ENCODE measurements at regions of chr3 and their contacts with region 1.

Region 1: DNA sequence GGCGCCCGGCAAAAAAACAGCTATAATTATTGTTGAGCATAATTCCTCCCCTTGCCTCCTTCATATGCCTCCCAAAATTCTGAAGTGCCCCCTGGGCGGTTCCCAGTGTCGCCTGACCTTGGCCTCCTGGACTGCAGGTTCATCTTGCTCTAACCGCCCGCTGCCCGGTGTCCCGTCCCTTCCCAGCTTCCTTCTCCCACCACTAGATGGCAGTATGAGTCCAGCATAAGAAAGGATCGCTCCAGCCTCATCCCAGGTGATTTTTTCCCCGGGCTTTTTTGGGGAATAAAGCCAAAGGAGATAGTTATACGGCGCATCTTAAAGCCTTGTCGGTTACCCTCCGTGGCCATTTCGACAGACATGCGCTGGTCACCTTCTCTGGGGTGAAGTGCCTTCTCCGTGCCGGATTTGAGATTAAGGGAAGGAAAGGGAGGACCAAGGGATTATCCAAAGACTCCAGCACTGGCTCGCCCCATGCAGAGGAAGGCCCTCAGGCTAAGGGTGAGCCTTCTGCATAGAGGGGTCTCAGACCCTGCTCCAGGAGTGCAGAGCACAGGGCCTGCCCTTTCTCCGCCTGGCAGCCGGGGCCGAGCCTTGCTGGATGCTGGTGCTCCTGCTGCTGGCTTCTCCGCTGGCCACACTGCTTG is 45.8 kb upstream of the TRA2B start:
- DNase-seq: peak; percentile 70 to 83
- ATAC-seq: peak; percentile 92
- H3K4me3 ChIP-seq: no peak overlapping the region
- H3K27ac ChIP-seq: no peak overlapping the region
- H3K4me1 ChIP-seq: no peaks in the 10 kb centered on the region
- H3K27me3 ChIP-seq: no peaks in the 10 kb centered on the region

Region 2: GRCh38 chr3:186241910-186242821 is 258.5 kb after region 1 on chr3:
- intact Hi-C with region 1: loop called (anchors 1 to 5 kb)
- DNase-seq: peak; percentile 84 to 87
- ATAC-seq: peak; percentile 84
- H3K4me3 ChIP-seq: no peak overlapping the region
- H3K27ac ChIP-seq: no peak overlapping the region
- H3K4me1 ChIP-seq: no peaks in the 10 kb centered on the region
- H3K27me3 ChIP-seq: no peaks in the 10 kb centered on the region

Region 3: GRCh38 chr3:186361762-186362536 is 378.3 kb after region 1 on chr3 and contains the start of gene DGKG:
- intact Hi-C with region 1: loop called in 1 of 2 experiments (anchors 2 kb)
- DNase-seq: peak; percentile 79 to 91
- ATAC-seq: peak; percentile 88
- H3K4me3 ChIP-seq: peak within 1 kb of the TSS; percentile 36 to 49
- H3K27ac ChIP-seq: peak within 1 kb of the TSS in 1 of 2 donors; percentile 41
- H3K4me1 ChIP-seq: no peaks in the 10 kb centered on the region
- H3K27me3 ChIP-seq: no peaks in the 10 kb centered on the region
- total RNA-seq, gene DGKG: 12.8 to 37.1 TPM

Region 4: GRCh38 chr3:186540221-186540834 is 556.7 kb after region 1 on chr3:
- intact Hi-C with region 1: loop called (anchors 2 to 5 kb)
- DNase-seq: peak in 1 of 2 donors; percentile 72
- ATAC-seq: peak; percentile 83
- H3K4me3 ChIP-seq: no peak overlapping the region
- H3K27ac ChIP-seq: no peak overlapping the region
- H3K4me1 ChIP-seq: no peaks in the 10 kb centered on the region
- H3K27me3 ChIP-seq: no peaks in the 10 kb centered on the region

Measured in aorta (tissue), 5 donors.